ENCODE measurements at regions of chr3 and their contacts with region 1.

Region 1: DNA sequence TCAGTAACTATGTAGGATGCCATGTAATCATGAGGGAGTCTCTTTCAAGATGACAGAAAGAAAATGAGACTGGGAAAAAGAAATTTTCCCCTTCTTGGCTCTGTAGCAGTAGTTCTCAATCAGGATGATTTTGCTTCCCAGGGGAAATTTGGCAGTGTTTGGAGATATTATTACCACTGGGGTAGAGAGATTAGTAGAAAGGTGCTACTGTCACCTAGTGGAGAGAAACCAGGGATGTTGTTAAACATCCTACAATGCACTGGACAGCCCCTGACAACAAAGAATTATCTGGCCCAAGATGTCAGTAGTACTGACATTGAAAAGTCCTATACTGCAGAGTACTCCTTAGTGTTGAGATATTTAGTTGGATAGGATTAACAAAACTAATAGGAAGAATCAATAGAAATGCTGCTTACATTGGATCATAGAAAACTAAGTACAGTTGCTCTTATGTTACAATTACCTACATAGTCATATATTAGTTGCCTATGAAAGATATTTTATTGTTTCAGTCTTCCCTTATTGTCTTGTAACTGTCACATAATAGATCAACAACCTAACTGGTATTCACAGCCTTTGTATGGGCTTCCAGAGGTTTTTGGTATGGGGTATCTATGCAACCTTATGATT is 433.3 kb downstream of the RAP2B start:
- DNase-seq: no peak
- H3K4me3 ChIP-seq: no peak overlapping the region
- H3K27ac ChIP-seq: no peak overlapping the region
- H3K4me1 ChIP-seq: no peaks in the 10 kb centered on the region
- H3K27me3 ChIP-seq: no peaks in the 10 kb centered on the region
- CTCF ChIP-seq: peak in 3 of 4 experiments; percentile 31 to 59 (median 37)
- POLR2A ChIP-seq: no peak

Region 2: DNA sequence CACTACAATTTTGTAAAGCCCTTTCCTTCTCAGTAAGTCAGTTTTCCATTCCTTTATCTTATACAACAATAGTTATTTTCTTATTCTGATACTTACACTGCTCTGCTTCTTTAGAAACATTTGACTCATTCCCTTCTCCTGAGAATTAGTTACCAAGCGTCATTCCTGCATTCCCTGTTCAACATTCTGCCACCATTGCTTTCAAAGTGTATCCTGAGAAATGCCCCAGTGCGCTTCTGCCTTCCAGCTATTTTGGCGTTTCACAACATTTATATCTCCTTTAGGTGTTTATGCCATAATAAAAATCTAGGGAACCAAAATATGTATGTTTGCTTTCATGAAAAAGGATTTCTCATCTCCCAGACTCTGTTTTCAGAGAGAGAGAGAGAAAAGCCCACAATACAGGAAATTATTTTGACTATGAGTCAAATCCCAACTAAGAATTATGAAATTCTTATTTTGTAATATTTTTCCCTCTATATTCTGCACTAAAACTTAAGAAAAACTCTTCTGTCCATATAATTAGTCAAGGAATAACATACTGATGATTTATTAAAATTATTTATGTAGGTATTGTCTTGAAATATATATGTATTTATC is 551.5 kb before region 1 on chr3:
- intact Hi-C with region 1: loop called (anchors 5 kb)
- DNase-seq: no peak
- H3K4me3 ChIP-seq: no peak overlapping the region
- H3K27ac ChIP-seq: no peak overlapping the region
- H3K4me1 ChIP-seq: no peaks in the 10 kb centered on the region
- H3K27me3 ChIP-seq: no peaks in the 10 kb centered on the region
- CTCF ChIP-seq: no peak
- POLR2A ChIP-seq: no peak

Region 3: GRCh38 chr3:153161138-153161713 is 434.1 kb before region 1 on chr3:
- intact Hi-C with region 1: loop called (anchors 10 kb)
- DNase-seq: peak; percentile 96
- H3K4me3 ChIP-seq: peak overlapping the region; percentile 83 to 87
- H3K27ac ChIP-seq: peak overlapping the region; percentile 86 to 94
- H3K4me1 ChIP-seq: no peaks in the 10 kb centered on the region
- H3K27me3 ChIP-seq: no peaks in the 10 kb centered on the region
- CTCF ChIP-seq: peak in 1 of 4 experiments; percentile 10
- POLR2A ChIP-seq: peak; percentile 70

Region 4: DNA sequence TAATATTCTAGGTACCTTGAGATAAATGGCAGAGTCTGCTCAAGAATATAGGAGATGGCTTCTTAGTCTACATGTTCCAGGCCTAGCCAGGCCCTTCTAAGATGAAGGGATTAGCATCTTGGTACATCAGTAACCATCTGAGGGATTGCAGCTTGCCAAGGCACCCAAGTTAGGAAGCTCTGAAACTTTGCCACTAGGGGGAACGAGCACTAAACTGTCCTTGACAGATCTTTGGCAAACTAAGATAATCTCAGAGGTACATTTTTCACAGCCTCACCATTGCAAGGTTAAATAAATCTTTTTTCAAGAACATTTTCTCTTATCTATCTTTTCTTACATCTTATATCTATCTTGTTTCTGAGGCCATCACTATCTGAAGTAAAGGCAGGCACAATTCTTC is 82.1 kb before region 1 on chr3:
- intact Hi-C with region 1: no loop called
- DNase-seq: no peak
- H3K4me3 ChIP-seq: no peak overlapping the region
- H3K27ac ChIP-seq: no peak overlapping the region
- H3K4me1 ChIP-seq: no peaks in the 10 kb centered on the region
- H3K27me3 ChIP-seq: no peaks in the 10 kb centered on the region
- CTCF ChIP-seq: no peak
- POLR2A ChIP-seq: no peak

Measured in prostate gland (tissue), 2 donors.